Cardiac septum (tissue), 1 donor: ENCODE measurements at regions of chr16 and their contacts with region 1.

Region 1: GRCh38 chr16:3059000-3059722 is 6.3 kb upstream of the IL32 start:
- DNase-seq: peak; percentile 95

Region 2: DNA sequence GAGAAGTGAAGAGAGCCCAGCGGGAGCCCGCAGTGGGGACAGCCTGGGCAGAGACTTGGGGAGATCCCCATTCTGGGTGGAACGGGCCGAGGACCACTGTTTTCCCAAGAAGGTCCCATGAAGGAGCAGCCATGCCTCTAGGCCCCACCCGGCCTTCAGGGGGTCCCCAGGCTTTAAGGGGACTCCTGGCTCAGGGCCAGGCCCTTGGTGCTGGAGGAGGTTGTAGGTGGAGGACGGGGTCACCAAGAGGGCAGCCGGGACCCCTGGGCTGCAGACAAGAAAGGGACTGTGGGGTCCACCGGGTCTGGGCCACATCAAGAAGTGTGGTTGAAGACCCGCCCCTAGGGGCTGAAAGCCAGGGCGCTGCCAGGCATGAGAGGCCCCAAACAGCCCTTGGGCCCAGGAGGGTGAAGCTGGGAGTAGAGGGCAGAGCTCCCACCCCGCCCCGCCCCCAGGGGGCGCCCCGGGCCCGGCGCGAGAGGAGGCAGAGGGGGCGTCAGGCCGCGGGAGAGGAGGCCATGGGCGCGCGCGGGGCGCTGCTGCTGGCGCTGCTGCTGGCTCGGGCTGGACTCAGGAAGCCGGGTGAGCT is 242.3 kb before region 1 on chr16 and contains the start of gene PRSS21:
- intact Hi-C with region 1: no loop called
- DNase-seq: peak; percentile 33
- total RNA-seq, gene PRSS21: not detected

Region 3: DNA sequence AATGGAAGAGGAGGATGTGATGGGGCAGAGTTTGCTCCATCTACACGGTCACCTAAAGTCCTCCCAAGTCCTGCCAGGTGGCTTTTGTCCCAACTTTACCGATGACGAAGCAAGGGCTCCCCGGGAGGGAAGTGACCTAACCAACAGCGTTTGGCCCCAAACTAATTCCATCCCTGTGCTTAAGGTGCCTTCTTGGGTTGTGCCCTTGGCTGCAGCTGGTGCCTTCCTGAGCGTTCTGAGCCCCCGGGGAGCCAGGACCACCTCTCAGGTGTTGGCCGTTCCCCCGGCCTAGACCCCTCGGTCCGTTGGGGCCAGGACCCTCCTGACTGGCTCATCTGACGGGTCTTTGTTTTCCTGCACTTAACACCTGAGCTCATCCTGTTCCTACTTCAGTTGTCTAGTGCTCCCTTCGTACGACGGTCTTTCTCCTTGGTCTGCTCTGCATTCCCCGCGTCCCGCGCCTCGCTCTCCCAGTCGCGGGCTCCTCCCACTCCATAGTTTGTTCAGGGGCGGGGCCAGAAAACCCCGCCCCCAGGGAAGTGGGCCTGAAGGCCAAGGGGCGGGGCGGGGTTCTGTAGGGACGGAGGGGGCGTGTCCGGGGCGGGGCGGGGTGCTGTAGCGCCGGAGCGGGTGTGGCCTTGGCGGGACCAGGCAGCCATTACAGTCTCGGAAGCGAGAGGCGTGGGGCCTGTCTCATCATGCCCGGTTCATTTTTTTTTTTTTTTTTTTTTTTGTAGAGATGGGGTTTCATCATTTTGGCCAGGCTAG is 40.8 kb after region 1 on chr16:
- intact Hi-C with region 1: loop called (anchors 5 kb)
- DNase-seq: peak; percentile 96

Region 4: GRCh38 chr16:3129137-3130131 is 70.3 kb after region 1 on chr16:
- intact Hi-C with region 1: loop called (anchors 2 kb)
- DNase-seq: peak; percentile 85

Region 5: GRCh38 chr16:3165111-3165822 is 106.1 kb after region 1 on chr16:
- intact Hi-C with region 1: loop called (anchors 5 kb)
- DNase-seq: no peak